HAP-1 (cell line): ENCODE measurements at regions of chr1 and their contacts with region 1.

Region 1: DNA sequence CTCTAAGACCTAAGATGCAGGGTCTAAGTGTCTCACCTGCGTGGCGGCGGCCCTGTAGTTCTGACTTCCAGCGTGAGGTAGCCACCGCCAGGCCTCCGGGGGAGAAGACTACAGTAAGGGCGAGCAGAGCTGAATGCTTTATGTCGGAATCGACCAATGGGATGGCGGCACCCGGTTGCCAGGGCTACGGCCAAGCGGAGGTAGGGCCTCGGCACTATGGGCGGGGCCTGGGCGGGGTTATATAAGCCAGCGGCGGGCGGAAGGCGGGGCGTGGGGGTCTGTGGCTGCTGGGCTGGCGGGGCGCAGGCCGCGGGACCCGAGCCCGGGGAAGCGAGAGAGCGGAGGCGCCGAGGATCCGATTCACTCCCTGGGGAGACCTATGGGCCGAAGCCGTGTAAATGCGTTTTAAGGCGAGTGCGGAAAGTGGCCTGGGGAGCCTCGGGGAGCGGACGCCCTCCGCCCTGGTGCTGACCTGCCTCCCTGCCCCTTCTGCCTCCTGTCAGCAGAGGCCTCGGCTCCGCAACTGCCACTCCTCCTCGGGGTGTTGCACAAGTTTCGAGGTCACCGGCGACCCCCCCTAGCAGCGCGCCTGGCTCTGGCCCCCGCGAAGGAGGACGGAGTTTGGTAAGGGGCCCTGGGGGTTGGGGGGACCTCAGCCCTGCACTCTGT is at the start of gene AZIN2:
- DNase-seq: peak; percentile 90 to 99
- H3K4me3 ChIP-seq: peak within 1 kb of the TSS; percentile 50
- H3K4me1 ChIP-seq: peaks cover 10% of the 10 kb centered on the region
- H3K27me3 ChIP-seq: no peaks in the 10 kb centered on the region

Region 2: DNA sequence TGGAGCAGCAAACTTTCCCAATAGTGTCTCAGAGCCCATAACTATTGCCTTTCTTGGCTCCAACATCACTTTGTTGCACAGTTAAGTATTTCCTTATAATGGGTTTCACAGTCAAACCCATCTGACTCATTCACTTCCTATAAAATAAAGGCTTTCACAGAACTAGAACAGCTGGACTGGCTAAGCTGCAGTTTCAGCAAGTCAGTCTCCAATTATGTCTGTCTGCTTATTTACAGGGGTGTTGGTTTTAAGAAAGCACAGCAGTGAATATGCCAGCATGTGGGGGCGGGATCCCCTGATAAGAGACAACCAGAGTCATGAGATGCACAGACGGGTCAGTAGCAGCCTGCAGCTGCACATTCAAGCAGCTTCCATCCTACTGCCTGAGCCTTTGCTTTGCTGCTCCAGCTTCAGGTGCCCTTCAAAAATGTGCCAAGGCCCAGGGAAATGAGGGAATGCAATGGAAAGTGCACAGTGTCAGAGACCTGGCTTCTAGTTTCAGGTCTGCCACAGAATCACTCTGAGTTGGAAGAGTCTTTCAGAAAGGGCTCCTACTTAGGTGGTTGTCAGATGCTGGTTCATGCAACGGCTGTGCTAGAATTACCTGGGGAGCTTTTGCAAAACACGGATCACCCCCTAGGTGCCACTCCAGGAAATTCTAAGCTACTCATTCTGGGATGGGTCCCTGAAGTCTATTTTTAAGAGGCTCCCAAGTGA is 141.2 kb before region 1 on chr1:
- in situ Hi-C with region 1: loop called (anchors 10 kb)
- DNase-seq: no peak
- H3K4me3 ChIP-seq: no peak overlapping the region
- H3K4me1 ChIP-seq: peaks cover 15% of the 10 kb centered on the region
- H3K27me3 ChIP-seq: no peaks in the 10 kb centered on the region

Region 3: GRCh38 chr1:33152685-33153432 is 71.8 kb after region 1 on chr1:
- in situ Hi-C with region 1: no loop called
- DNase-seq: peak; percentile 91 to 96
- H3K4me3 ChIP-seq: no peak overlapping the region
- H3K4me1 ChIP-seq: peaks cover 15% of the 10 kb centered on the region
- H3K27me3 ChIP-seq: no peaks in the 10 kb centered on the region